ENCODE measurements at regions of chr6 and their contacts with region 1.

Region 1: GRCh38 chr6:37819177-37819823 is at the start of gene ZFAND3:
- DNase-seq: peak; percentile 97
- H3K4me3 ChIP-seq: peak within 1 kb of the TSS; percentile 78 to 91 (median 87)
- H3K27ac ChIP-seq: peak within 1 kb of the TSS; percentile 97
- H3K4me1 ChIP-seq: peaks cover 38% of the 10 kb centered on the region
- H3K27me3 ChIP-seq: no peaks in the 10 kb centered on the region
- CTCF ChIP-seq: no peak
- total RNA-seq, gene ZFAND3: 34.8 to 79.5 TPM

Region 2: DNA sequence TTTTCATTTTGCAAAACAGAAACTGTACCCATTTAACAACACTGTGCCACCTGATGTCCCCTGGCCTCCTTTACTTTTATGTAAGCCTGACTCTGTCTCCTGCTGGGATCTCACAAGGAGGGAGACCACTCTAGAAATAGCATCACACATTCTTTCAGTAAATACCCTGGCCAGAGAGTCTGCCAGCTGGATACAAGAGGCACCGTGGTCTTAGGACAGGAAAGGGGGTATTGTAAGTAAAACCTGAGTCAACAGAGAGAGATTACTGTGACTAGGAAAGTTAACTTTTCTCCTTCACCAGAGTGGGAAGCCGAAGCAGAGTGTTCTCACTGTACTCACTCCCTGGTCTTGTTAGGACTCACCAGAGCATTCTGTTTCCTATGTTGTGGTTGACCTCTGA is 358.5 kb before region 1 on chr6:
- CTCF ChIA-PET with region 1: no interaction called
- dilution Hi-C with region 1: no loop called
- in situ Hi-C with region 1: no loop called
- intact Hi-C with region 1: no loop called
- DNase-seq: no peak
- H3K4me3 ChIP-seq: no peak overlapping the region
- H3K27ac ChIP-seq: no peak overlapping the region
- H3K4me1 ChIP-seq: peaks cover 10% of the 10 kb centered on the region
- H3K27me3 ChIP-seq: no peaks in the 10 kb centered on the region
- CTCF ChIP-seq: no peak

Region 3: GRCh38 chr6:37860226-37860839 is 41.0 kb after region 1 on chr6:
- CTCF ChIA-PET with region 1: no interaction called
- dilution Hi-C with region 1: loop called (anchors 5 kb)
- in situ Hi-C with region 1: no loop called
- intact Hi-C with region 1: loop called (anchors 1 kb)
- DNase-seq: no peak
- H3K4me3 ChIP-seq: no peak overlapping the region
- H3K27ac ChIP-seq: no peak overlapping the region
- H3K4me1 ChIP-seq: peaks cover 16% of the 10 kb centered on the region
- H3K27me3 ChIP-seq: no peaks in the 10 kb centered on the region
- CTCF ChIP-seq: peak; percentile 56 to 70

Region 4: DNA sequence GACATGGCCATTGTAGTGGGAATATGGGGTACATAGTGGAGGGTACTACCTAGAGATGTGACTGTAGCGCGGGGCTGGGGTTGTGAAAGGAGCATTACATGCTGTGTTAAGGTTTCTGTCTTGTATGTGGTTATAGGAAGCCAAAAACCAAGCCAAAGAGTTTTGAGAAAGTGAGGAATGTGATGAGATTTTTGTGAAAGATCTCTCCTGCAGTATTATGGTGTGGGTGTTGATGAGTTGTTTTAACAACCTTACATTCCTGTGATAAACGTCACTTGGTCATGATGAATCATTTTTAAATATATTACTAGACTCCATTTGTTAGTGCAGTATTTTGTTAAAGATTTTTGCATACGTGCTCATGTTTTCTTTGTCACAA is 49.1 kb after region 1 on chr6:
- CTCF ChIA-PET with region 1: no interaction called
- dilution Hi-C with region 1: loop called (anchors 5 kb)
- in situ Hi-C with region 1: no loop called
- intact Hi-C with region 1: no loop called
- DNase-seq: peak; percentile 76
- H3K4me3 ChIP-seq: no peak overlapping the region
- H3K27ac ChIP-seq: peak overlapping the region; percentile 63
- H3K4me1 ChIP-seq: peaks cover 32% of the 10 kb centered on the region
- H3K27me3 ChIP-seq: no peaks in the 10 kb centered on the region
- CTCF ChIP-seq: no peak

Measured in mammary epithelial cell (primary cell).